ENCODE measurements at regions of chr11 and their contacts with region 1.

Region 1: DNA sequence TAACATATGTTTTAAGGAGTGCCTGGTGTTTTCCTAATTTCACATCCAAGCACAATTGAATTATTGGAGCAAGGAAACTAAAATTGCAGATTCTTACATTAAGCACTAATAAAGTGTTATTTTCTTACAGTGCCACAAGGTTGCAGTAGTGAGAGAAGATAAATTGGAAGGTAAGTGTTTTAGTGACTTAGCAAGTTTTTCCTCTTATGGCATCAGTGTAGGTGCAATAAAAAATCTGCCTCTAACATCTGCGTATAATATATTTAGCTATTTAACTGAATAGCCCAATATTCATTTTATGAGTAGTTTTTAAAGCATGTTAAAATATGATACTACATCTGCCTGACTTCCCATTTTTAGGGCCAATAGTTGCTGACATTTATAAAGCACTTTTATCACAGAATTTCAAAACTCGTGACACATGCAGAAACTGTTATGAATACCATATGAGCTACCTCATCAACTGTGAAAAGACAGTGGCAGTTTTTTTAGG is 19.0 kb downstream of the POLD3 start:
- DNase-seq: peak; percentile 36
- ATAC-seq: no peak
- H3K4me3 ChIP-seq: no peak overlapping the region
- H3K27ac ChIP-seq: no peak overlapping the region
- H3K4me1 ChIP-seq: peaks cover 19% of the 10 kb centered on the region
- H3K27me3 ChIP-seq: no peaks in the 10 kb centered on the region; a peak in 1 of 5 replicates
- CTCF ChIP-seq: peak; percentile 52
- EP300 ChIP-seq: no peak
- POLR2A ChIP-seq: no peak
- RAD21 ChIP-seq: no peak

Region 2: DNA sequence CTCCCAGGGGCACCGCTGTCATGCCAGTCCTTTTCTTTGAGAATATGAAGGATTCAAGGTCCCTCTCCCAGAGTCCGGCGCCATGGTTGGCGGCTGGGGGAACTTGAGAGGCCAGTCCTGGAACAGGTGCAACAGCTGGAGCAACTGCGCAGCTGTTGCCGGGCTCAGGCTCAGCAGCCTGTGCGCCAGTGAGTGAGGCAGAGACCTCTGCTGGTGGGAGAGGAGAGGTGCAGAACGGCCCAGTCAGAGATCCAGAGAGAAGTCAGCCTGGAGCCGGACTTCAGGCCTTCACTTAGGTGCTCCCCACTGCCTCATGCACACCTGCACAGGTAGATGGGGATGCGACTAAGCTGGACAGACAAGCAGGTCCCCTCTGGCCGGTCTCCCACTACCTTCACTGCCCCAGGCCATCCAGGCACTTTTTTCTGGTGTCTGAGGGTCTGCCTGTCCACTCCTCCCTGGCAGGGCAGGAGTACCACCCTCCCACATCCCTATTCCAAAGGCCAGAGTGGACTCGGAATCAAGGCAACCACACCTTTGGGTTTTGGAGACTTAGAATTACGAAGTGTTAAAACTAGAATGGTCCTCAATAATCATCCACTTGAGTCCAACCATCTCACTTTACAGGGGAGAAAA is 115.2 kb after region 1 on chr11:
- CTCF ChIA-PET with region 1: interaction called, 10 read pairs
- POLR2A ChIA-PET with region 1: no interaction called
- in situ Hi-C with region 1: no loop called
- intact Hi-C with region 1: no loop called
- DNase-seq: peak; percentile 58
- ATAC-seq: peak; percentile 95
- H3K4me3 ChIP-seq: no peak overlapping the region
- H3K27ac ChIP-seq: no peak overlapping the region
- H3K4me1 ChIP-seq: peaks cover 20% of the 10 kb centered on the region
- H3K27me3 ChIP-seq: peaks cover 4 to 87% of the 10 kb centered on the region in 2 experiments; a peak in 4 of 5 replicates
- CTCF ChIP-seq: peak; percentile 95
- EP300 ChIP-seq: no peak
- POLR2A ChIP-seq: no peak
- RAD21 ChIP-seq: peak; percentile 84

Region 3: GRCh38 chr11:74748211-74749127 is 137.1 kb after region 1 on chr11 and contains the start of gene RNF169:
- CTCF ChIA-PET with region 1: no interaction called
- POLR2A ChIA-PET with region 1: no interaction called
- in situ Hi-C with region 1: no loop called
- intact Hi-C with region 1: loop called (anchors 10 kb)
- DNase-seq: peak; percentile 91
- ATAC-seq: peak; percentile 97
- H3K4me3 ChIP-seq: peak within 1 kb of the TSS; percentile 71 to 78 (median 77)
- H3K27ac ChIP-seq: peak within 1 kb of the TSS; percentile 93
- H3K4me1 ChIP-seq: peaks cover 45% of the 10 kb centered on the region
- H3K27me3 ChIP-seq: no peaks in the 10 kb centered on the region; a peak in 1 of 5 replicates
- CTCF ChIP-seq: no peak
- EP300 ChIP-seq: no peak
- POLR2A ChIP-seq: peak; percentile 67 to 72
- RAD21 ChIP-seq: 0 out of 2 replicates have a peak, but pooled peaks have one; percentile 12
- total RNA-seq, gene RNF169: 14.2 and 17.0 TPM in 2 replicates

Measured in HepG2 (cell line).